Left cardiac atrium (tissue), 4 donors: ENCODE measurements at regions of chr13 and their contacts with region 1.

Region 1: GRCh38 chr13:103188713-103189326 is 122.6 kb upstream of the SLC10A2 start:
- DNase-seq: no peak
- ATAC-seq: no peak

Region 2: GRCh38 chr13:103006641-103007426 is 182.0 kb before region 1 on chr13:
- intact Hi-C with region 1: no loop called
- DNase-seq: no peak
- ATAC-seq: peak; percentile 22 to 66

Region 3: GRCh38 chr13:103794526-103794925 is 605.7 kb after region 1 on chr13:
- intact Hi-C with region 1: loop called in 1 of 2 experiments (anchors 5 kb)
- DNase-seq: no peak
- ATAC-seq: no peak